Left colon (tissue), 2 donors: ENCODE measurements at regions of chr1 and their contacts with region 1.

Region 1: GRCh38 chr1:182084487-182085316 is 23.2 kb upstream of the ZNF648 start:
- DNase-seq: peak; percentile 84 to 89
- ATAC-seq: peak; percentile 90

Region 2: GRCh38 chr1:182391362-182392044 is 306.8 kb after region 1 on chr1 and contains the start of gene GLUL:
- intact Hi-C with region 1: loop called (anchors 2 to 10 kb)
- DNase-seq: peak; percentile 93 to 94
- ATAC-seq: peak; percentile 87
- total RNA-seq, gene GLUL: 436 to 776 TPM

Region 3: GRCh38 chr1:182397771-182398393 is 313.2 kb after region 1 on chr1:
- intact Hi-C with region 1: loop called (anchors 2 to 10 kb)
- DNase-seq: no peak
- ATAC-seq: peak; percentile 34